ENCODE measurements at regions of chr11 and their contacts with region 1.

Region 1: GRCh38 chr11:85664615-85665481 is at the start of gene CREBZF:
- DNase-seq: peak; percentile 80 to 97
- H3K4me3 ChIP-seq: peak within 1 kb of the TSS; percentile 74 to 90
- H3K27ac ChIP-seq: peak within 1 kb of the TSS; percentile 99
- H3K4me1 ChIP-seq: peaks cover 0 to 25% of the 10 kb centered on the region in 2 donors
- H3K27me3 ChIP-seq: no peaks in the 10 kb centered on the region
- CTCF ChIP-seq: peak in 1 of 3 experiments; percentile 7
- total RNA-seq, gene CREBZF: 29.7 TPM

Region 2: GRCh38 chr11:85627998-85628770 is 36.7 kb before region 1 on chr11 and contains the start of gene TMEM126B:
- intact Hi-C with region 1: loop called (anchors 1 kb)
- DNase-seq: peak; percentile 94 to 99
- H3K4me3 ChIP-seq: peak within 1 kb of the TSS; percentile 51 to 88
- H3K27ac ChIP-seq: peak within 1 kb of the TSS; percentile 92 to 97
- H3K4me1 ChIP-seq: peaks cover 0 to 6% of the 10 kb centered on the region in 2 donors
- H3K27me3 ChIP-seq: no peaks in the 10 kb centered on the region
- CTCF ChIP-seq: no peak
- total RNA-seq, gene TMEM126B: 76.4 TPM

Region 3: DNA sequence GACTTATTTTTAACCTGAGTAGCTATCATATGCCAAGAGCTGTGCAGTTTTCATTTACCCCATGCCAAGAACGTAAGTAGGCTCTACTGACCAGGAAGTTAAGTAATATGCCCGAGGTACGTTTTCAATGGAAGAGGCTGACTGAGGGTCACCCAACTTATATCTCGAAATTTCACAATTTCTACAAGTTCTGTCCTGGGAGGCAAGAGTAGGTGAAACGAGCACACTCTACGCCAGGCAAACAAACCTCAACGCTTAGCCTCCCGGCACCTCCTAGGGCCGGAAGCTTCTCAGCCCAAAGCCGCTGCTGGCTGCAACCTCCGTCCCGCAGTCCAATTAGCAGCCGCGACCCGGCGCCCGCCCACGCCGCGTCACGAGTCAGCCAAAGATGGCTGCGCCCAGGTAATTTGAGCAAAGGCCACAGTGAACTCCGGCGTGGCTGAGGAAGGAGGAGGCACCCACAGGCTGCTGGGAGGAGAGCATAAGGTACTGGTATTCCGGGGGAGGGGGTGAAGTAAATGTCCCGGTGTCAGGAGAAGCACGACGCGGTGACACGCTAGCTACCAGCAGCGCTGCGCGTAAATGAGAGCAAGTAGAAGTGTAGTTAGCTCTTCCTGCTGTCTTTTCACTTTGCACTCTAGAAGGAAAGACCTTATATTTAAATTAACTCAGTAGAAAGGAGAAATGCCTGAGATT is 17.1 kb before region 1 on chr11 and contains the start of gene TMEM126A:
- intact Hi-C with region 1: loop called (anchors 1 kb)
- DNase-seq: peak; percentile 64 to 95
- H3K4me3 ChIP-seq: peak within 1 kb of the TSS; percentile 61 to 84
- H3K27ac ChIP-seq: peak within 1 kb of the TSS; percentile 81 to 86
- H3K4me1 ChIP-seq: peaks cover 3 to 7% of the 10 kb centered on the region in 2 donors
- H3K27me3 ChIP-seq: no peaks in the 10 kb centered on the region
- CTCF ChIP-seq: no peak
- total RNA-seq, gene TMEM126A: 6.8 TPM

Region 4: DNA sequence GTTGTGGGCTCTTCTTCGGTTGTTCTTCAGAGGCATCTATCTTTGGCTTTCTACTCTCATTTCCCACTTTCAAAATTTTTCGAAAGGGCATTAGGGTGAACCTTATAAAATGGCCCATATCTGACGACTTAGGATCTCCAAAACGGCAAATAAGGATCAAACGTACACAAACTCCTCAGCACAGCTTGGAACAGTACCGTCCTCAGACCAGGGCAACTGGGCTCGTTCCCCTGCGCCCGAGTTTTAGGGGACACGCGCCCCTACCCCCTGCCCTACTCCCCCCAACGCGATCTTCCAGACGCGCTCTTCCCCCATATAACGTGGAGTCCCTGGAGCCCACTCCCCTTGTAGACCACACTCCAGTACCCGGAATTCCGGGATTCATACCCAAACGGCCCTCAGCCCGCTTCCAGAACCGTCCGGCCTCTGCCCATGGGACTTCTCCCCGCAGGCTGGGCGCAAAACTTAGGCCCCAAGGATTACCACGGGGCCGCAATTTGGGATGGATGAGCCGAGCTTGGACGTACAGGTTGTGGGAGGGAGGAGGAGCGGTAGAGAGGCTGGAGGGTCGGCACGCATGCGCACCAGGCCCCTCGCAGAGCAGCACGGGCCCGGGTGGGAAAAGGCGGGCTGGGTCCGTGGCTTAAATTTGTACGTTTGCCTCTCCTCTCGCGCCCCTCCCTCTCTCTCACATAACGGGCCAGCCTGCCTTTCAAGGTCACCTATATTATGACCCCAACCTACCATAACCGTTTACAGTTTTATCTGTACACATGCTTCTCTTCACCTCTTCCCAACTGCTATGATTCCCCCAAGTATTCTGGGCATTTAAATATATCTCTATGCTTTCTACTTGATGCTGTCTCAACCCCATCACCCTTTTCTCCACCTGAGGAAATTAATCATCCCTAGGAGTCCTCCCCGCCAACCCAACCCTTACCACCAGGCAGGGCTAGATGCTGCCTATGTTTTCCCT is 17.8 kb after region 1 on chr11:
- intact Hi-C with region 1: loop called (anchors 1 kb)
- DNase-seq: peak in 1 of 2 donors; percentile 71
- H3K4me3 ChIP-seq: peak overlapping the region; percentile 58 to 74
- H3K27ac ChIP-seq: no peak overlapping the region
- H3K4me1 ChIP-seq: peaks cover 5 to 6% of the 10 kb centered on the region in 2 donors
- H3K27me3 ChIP-seq: no peaks in the 10 kb centered on the region
- CTCF ChIP-seq: no peak

Region 5: DNA sequence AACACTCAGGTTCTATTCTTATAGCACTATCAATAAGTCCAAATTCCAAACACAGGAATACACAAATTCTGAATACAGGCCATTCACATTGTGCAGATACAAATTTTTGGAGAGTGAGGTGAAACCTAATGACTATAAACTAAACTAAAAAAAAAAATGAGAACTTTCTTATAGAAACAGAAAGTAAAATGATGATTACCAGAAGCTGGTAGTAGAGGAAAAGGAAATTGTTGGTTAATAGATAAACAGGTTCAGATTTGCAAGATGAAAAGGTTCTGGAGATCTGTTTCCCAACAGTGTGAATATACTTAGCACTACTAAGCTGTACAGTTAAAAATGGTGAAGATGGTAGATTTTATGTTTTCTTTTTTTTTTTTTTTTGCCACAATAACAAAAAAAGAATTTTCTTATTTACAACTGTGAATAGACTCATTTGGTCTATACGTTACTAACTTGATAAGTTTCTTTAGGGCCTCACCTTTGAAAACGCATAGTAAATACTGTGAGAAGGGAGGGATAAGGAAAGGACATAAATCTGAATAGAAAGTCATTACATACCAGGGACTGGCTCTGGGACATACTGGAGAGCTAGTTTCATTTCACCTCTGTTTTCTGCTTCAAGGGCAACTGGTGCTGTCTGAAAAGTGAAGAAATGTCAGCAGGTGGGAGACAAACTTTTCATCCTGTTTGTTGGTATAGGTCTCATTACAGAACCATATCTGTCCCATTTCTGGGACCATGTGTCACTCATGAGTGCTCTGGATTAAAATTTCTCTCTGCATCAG is 35.3 kb after region 1 on chr11:
- intact Hi-C with region 1: no loop called
- DNase-seq: no peak
- H3K4me3 ChIP-seq: no peak overlapping the region
- H3K27ac ChIP-seq: no peak overlapping the region
- H3K4me1 ChIP-seq: no peaks in the 10 kb centered on the region
- H3K27me3 ChIP-seq: no peaks in the 10 kb centered on the region
- CTCF ChIP-seq: no peak

Region 6: GRCh38 chr11:85718991-85719807 is 54.4 kb after region 1 on chr11:
- intact Hi-C with region 1: loop called (anchors 2 kb)
- DNase-seq: peak; percentile 9 to 80
- H3K4me3 ChIP-seq: peak overlapping the region in 1 of 2 donors; percentile 51
- H3K27ac ChIP-seq: peak overlapping the region; percentile 60 to 66
- H3K4me1 ChIP-seq: peaks cover 0 to 8% of the 10 kb centered on the region in 2 donors
- H3K27me3 ChIP-seq: no peaks in the 10 kb centered on the region
- CTCF ChIP-seq: no peak

Region 7: DNA sequence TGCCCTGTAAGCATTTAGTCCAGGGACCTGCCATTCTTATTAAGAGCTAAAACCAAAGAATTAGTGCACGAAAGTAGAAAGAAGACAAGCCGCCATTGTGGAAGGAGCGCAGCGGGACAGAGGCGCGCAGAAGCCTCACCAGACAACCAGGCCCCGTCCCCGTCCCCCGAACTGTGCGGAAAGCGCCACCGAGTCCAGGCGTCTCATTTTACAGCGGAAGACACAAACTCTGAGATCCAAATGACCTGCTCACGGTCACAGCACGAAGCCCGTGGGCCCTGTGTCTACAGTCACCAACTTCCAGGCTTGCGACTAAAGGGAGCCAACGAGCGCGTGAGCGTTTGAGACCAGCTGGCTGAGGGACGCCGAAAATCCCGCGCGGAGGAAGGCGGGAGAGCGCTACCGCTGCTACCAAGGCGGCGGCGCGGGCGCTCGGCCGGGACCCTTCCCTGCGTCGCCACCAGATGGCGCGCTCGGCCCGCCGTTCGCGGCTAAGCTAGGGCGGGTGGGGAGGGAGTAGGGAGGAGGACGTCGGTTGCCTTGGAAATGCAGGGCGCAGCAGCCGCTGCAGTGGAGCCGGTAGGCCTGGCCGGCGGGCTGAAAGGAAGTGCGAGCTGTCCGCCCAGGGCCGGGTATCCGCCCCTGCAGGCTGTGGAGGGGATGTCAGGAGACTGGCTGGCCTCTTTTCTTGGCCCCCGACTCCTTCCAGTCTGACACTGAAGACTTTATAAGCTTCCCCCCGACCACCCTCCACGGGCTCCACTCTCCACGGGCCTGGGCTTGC is 189.9 kb after region 1 on chr11:
- intact Hi-C with region 1: loop called (anchors 10 kb)
- DNase-seq: peak; percentile 65 to 95
- H3K4me3 ChIP-seq: peak overlapping the region; percentile 73 to 77
- H3K27ac ChIP-seq: peak overlapping the region; percentile 79 to 83
- H3K4me1 ChIP-seq: peaks cover 0 to 7% of the 10 kb centered on the region in 2 donors
- H3K27me3 ChIP-seq: no peaks in the 10 kb centered on the region
- CTCF ChIP-seq: peak; percentile 94 to 99 (median 99)

Region 8: DNA sequence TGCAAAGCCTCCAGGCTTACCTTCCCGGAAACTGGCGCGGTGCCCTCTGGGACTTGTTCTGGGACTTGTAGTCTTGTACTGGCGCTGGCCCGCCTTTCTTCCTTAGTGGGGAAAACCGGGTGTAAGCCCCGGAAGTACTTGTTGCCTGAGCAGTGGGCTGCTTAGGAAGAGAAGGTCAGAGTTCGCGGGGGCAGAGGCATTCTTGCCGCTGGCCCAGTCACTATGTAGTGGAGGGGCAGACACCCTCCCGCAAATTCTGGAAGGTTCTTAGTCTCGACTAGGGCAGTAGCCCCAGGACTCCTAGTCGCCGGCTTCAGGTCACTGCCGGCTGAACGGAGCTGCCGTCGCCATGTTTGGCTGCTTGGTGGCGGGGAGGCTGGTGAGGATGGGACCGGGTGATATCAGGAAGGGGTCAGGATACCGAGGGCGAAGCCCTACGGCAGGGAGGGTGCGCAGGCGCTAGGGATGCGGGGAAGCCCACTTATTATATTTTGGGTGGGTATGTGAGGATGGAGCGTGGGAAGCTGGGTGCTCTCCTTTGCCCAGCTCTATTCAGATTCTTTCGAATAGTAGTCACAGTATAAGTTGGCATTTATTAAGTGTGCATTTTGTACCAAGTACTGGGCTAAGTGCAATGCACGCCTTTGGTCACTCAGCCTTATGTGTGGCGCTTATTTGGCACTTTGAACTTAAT is 637.4 kb after region 1 on chr11 and contains the start of gene HIKESHI:
- intact Hi-C with region 1: loop called (anchors 10 kb)
- DNase-seq: peak; percentile 98 to 100
- H3K4me3 ChIP-seq: peak within 1 kb of the TSS; percentile 84 to 89
- H3K27ac ChIP-seq: peak within 1 kb of the TSS; percentile 86 to 92
- H3K4me1 ChIP-seq: peaks cover 0 to 9% of the 10 kb centered on the region in 2 donors
- H3K27me3 ChIP-seq: no peaks in the 10 kb centered on the region
- CTCF ChIP-seq: no peak
- total RNA-seq, gene HIKESHI: 28.9 TPM

Measured in ascending aorta (tissue), 2 donors.